ENCODE measurements at regions of chr14 and their contacts with region 1.

Region 1: GRCh38 chr14:63960926-63961567 is 108.2 kb downstream of the SYNE2 start:
- DNase-seq: no peak
- ATAC-seq: no peak
- H3K4me3 ChIP-seq: no peak overlapping the region
- H3K27ac ChIP-seq: no peak overlapping the region
- H3K4me1 ChIP-seq: no peaks in the 10 kb centered on the region
- H3K27me3 ChIP-seq: no peaks in the 10 kb centered on the region
- CTCF ChIP-seq: no peak
- EP300 ChIP-seq: no peak
- POLR2A ChIP-seq: no peak
- RAD21 ChIP-seq: no peak

Region 2: DNA sequence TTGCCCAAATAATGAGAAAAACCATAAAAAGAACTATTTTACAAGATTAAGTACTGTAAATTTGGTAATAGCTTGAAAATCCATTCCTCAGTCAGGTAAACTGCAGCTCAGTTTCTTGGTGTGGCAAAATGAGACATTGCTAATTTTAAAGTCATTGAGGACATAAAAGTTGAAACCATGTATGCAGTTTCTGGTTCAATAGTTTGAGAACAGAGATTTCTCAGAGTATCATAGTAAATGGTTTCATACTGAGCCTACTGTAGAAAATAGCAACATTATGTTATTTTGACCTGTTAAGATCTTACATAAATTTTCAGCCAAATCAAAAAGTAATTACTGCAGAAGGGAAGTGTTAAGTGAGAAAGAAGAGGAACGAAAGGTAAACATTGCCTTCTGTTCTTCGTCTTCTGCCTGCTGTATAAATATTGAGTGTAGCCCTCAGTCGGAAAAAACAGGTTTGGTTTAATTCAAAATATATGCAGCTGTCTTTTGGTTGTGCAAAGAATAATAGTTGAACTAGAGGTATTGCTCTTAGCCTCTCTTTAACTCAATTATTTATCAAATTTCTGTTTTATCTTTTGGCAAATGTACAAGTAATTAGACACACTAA is 11.4 kb after region 1 on chr14:
- CTCF ChIA-PET with region 1: interaction called, 4 read pairs
- POLR2A ChIA-PET with region 1: no interaction called
- RAD21 ChIA-PET with region 1: interaction called, 3 read pairs
- SMC1A ChIA-PET with region 1: interaction called, 10 read pairs
- in situ Hi-C with region 1: no loop called
- intact Hi-C with region 1: no loop called
- DNase-seq: no peak
- ATAC-seq: peak; percentile 70
- H3K4me3 ChIP-seq: peak overlapping the region; percentile 31; the same call in 1 of the 2 replicates
- H3K27ac ChIP-seq: peak overlapping the region; percentile 80
- H3K4me1 ChIP-seq: peaks cover 16% of the 10 kb centered on the region
- H3K27me3 ChIP-seq: no peaks in the 10 kb centered on the region
- CTCF ChIP-seq: no peak
- EP300 ChIP-seq: no peak
- POLR2A ChIP-seq: no peak
- RAD21 ChIP-seq: no peak

Region 3: GRCh38 chr14:63981569-63981968 is 20.5 kb after region 1 on chr14:
- CTCF ChIA-PET with region 1: interaction called, 5 read pairs
- POLR2A ChIA-PET with region 1: interaction called, 3 read pairs
- RAD21 ChIA-PET with region 1: interaction called, 3 read pairs
- SMC1A ChIA-PET with region 1: interaction called, 11 read pairs
- in situ Hi-C with region 1: no loop called
- intact Hi-C with region 1: no loop called
- DNase-seq: no peak
- ATAC-seq: peak; percentile 20
- H3K4me3 ChIP-seq: no peak overlapping the region
- H3K27ac ChIP-seq: peak overlapping the region; percentile 61
- H3K4me1 ChIP-seq: no peaks in the 10 kb centered on the region; the same call in 1 of the 2 replicates
- H3K27me3 ChIP-seq: no peaks in the 10 kb centered on the region
- CTCF ChIP-seq: no peak
- EP300 ChIP-seq: no peak
- POLR2A ChIP-seq: no peak
- RAD21 ChIP-seq: no peak

Region 4: GRCh38 chr14:64109821-64110554 is 148.9 kb after region 1 on chr14:
- CTCF ChIA-PET with region 1: no interaction called
- POLR2A ChIA-PET with region 1: no interaction called
- RAD21 ChIA-PET with region 1: no interaction called
- SMC1A ChIA-PET with region 1: no interaction called
- in situ Hi-C with region 1: no loop called
- intact Hi-C with region 1: no loop called
- DNase-seq: no peak
- ATAC-seq: no peak
- H3K4me3 ChIP-seq: no peak overlapping the region
- H3K27ac ChIP-seq: no peak overlapping the region
- H3K4me1 ChIP-seq: no peaks in the 10 kb centered on the region
- H3K27me3 ChIP-seq: no peaks in the 10 kb centered on the region
- CTCF ChIP-seq: no peak
- EP300 ChIP-seq: no peak
- POLR2A ChIP-seq: no peak
- RAD21 ChIP-seq: no peak